ENCODE measurements at regions of chr10 and their contacts with region 1.

Region 1: DNA sequence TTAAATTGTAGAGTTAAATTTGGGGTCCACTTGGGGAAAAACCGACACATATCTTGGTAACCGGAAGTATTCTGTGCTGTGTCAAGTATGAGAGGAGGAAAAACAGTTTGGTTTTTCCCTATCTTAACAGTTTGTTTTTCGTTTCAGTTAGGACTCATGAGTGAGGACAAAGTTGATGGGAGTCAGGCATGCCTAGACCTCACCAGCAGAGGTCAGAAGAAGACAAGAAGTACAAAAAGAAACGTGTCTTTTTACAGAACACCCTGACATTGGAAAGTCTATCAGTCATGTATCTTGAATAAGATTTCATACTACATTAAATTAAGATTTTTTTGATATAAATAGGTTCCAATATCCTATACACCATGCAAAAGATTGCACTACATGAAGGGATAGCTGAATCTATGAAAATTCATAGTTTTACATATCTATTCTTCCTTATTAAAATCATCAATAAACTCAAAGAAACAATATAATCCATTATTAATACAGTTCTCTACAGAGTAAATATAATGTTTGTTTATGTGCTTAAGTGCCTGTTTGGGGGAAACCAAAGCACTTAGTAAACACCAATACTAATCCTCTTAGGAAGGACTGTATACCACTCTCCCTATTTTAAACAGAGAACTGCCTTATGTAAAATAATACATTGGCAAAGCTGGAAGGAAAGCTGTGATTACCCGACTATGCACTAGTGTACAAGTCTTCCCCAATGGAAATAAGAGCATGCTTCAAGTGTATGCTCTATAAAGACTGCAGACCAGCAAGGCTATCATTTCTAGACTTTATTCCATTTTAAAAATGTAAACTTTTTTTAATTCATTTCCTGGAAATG is 95.6 kb downstream of the USP6NL start:
- DNase-seq: peak; percentile 29
- H3K4me3 Mint-ChIP-seq: no peak overlapping the region
- H3K27ac Mint-ChIP-seq: no peak overlapping the region
- H3K4me1 Mint-ChIP-seq: peaks cover 24% of the 10 kb centered on the region
- H3K27me3 Mint-ChIP-seq: peaks cover 35% of the 10 kb centered on the region

Region 2: DNA sequence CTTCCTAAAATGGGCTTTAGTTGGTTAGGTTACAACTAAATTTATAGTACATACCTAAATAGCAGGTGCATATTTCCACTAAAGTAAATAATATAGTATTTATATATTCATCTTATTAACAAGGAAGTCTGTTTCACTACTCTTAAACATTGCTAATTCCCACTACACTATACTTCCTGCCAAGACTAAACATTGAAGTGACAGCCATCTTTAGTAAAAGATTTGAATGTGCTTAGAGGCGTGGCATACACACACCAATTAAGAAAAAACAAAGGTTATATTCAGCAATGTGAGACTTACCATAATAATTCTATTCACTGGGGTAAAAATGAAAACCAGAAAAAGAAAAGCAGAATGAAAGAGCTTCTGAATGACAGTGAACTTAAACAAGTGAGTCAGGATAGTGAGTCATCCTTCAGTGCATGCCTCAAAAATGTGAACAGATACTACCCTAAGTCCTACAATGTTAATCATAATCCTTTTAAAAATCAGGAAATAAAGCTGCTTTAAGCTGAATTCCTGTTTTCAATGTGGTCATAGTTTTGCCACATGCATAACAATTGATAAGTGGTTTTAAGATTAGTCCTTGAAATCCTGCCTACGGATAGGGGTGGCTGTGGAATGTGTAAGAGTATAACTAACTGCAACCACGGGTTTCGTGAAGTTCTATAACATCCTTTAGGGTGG is 36.2 kb after region 1 on chr10:
- intact Hi-C with region 1: loop called (anchors 1 kb)
- DNase-seq: no peak
- H3K4me3 Mint-ChIP-seq: no peak overlapping the region
- H3K27ac Mint-ChIP-seq: no peak overlapping the region
- H3K4me1 Mint-ChIP-seq: peaks cover 33% of the 10 kb centered on the region
- H3K27me3 Mint-ChIP-seq: peaks cover 10% of the 10 kb centered on the region

Region 3: GRCh38 chr10:11631890-11632587 is 116.2 kb after region 1 on chr10:
- intact Hi-C with region 1: loop called (anchors 1 kb)
- DNase-seq: peak; percentile 27
- H3K4me3 Mint-ChIP-seq: peak overlapping the region; percentile 24
- H3K27ac Mint-ChIP-seq: peak overlapping the region; percentile 59
- H3K4me1 Mint-ChIP-seq: peaks cover 19% of the 10 kb centered on the region
- H3K27me3 Mint-ChIP-seq: peaks cover 39% of the 10 kb centered on the region

Region 4: DNA sequence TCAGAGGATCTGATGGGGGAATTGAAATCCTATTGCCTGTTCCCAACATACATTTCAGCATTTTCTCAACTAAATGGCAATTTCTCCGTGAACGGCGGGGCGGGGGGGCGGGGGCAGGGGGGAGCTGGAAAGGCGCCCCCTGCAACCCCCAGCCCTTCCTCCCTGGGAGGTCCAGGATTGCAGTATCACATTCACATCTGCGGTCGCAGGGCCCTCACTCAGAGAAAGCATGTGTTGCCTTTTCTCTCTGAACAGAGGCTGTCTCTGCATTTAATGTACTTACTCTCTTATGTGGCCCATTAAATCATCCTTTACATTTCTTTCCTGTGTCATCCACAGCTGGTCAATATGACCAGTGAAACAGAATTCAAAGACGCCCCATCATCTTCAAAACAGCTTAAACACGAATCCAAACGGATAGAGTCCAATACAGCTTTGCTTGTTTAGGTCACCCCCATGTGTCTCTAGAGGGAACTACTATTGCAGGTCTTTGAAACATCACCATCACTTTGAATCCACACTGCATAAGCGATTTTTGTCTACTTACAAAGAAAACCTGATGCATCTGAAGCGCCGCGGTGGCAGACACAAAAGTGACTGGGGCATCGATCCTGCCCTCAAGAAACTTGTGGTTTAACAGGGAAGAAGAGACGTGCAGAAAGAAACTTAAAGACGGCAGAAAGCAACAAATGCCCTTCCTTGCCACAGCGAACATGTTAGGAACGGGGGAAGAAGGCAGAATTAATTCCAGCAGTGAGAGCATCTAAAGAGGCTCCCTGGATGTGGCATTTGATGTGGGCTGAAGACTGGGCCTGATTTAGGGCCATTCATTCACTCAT is 209.3 kb after region 1 on chr10:
- intact Hi-C with region 1: loop called (anchors 1 kb)
- DNase-seq: no peak
- H3K4me3 Mint-ChIP-seq: no peak overlapping the region
- H3K27ac Mint-ChIP-seq: no peak overlapping the region
- H3K4me1 Mint-ChIP-seq: peaks cover 6% of the 10 kb centered on the region
- H3K27me3 Mint-ChIP-seq: peaks cover 39% of the 10 kb centered on the region

Region 5: DNA sequence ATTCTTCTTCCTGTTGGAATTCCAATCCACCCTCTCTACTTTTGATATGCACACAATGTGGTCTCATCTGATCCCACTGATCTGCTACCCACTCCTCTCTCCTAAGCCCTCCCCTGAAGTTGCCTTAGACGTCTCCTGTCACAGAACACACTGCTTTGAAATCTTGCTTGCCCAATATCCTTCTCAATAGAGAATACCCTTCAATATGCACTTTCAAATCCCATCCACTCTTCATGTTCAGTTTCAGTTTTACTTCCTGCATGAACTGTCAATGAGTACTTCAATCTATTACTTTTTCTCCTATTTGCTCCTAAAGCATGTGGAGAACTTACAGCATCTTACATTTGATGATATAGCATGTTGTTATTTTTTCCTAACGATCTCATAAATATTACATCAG is 433.3 kb after region 1 on chr10:
- intact Hi-C with region 1: no loop called
- DNase-seq: no peak
- H3K4me3 Mint-ChIP-seq: no peak overlapping the region
- H3K27ac Mint-ChIP-seq: peak overlapping the region; percentile 10
- H3K4me1 Mint-ChIP-seq: peaks cover 12% of the 10 kb centered on the region
- H3K27me3 Mint-ChIP-seq: no peaks in the 10 kb centered on the region

Region 6: DNA sequence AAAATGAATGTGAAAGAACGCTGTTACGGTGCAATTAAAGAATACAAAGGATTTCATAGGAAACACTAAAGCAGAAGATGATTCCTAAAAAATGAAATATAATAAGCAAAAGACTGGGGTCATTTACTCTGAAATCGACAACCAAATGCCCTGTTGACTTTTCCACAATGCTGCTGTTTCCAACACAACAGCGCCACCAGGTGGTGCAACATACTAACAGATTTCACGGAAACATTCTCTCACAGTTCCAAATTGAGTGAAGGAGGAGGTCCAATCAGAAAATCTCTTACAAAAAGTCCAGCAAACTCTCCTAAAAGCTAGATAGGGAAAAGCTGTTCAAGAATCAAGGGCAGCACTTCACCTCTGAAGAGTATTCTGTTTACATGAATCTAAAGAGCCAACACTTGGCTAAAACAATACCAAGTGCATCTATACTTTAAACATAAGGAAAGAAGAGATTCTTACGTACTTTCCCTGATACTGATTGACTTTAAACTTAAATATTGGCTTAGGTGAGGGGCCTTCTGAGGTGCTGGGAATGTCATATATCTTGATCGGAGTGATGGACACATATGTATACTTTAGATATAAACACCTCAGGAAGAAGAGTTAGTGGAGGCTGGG is 470.9 kb after region 1 on chr10:
- intact Hi-C with region 1: loop called (anchors 1 kb)
- DNase-seq: peak; percentile 59
- H3K4me3 Mint-ChIP-seq: no peak overlapping the region
- H3K27ac Mint-ChIP-seq: no peak overlapping the region
- H3K4me1 Mint-ChIP-seq: peaks cover 8% of the 10 kb centered on the region
- H3K27me3 Mint-ChIP-seq: no peaks in the 10 kb centered on the region

Measured in activated T-helper 1 cell treated with anti-CD3 and anti-CD28 coated beads, Interleukin-12 subunit alpha, Interleukin-12 subunit beta, Interleukin-2, Interleukin-4 antibody, amounts not matched to agents 30 ng/mL and 10 ng/mL and 1 ng/mL, durations not matched to agents 14 hours and 24 hours and 36 hours (primary cell).